ENCODE measurements at regions of chr10 and their contacts with region 1.

Region 1: DNA sequence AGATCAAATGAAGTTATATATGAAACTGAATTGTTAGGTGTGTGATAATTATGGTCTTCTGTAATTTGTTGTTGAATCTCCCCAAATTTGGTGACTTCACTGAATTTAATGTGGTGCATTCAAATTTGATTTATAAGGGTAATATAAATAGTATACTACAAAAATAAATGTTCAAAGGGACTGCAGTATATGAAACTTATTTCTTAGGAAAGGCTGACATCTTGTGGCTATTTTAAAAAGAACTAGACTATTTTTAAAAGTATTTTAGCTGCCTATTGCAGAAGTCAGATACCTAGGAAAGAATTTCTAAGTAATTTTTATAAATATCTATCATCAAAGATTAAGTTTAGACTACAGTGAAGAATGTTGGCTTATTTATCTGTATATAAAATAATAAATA is 36.6 kb downstream of the ATRNL1 start:
- DNase-seq: no peak

Region 2: DNA sequence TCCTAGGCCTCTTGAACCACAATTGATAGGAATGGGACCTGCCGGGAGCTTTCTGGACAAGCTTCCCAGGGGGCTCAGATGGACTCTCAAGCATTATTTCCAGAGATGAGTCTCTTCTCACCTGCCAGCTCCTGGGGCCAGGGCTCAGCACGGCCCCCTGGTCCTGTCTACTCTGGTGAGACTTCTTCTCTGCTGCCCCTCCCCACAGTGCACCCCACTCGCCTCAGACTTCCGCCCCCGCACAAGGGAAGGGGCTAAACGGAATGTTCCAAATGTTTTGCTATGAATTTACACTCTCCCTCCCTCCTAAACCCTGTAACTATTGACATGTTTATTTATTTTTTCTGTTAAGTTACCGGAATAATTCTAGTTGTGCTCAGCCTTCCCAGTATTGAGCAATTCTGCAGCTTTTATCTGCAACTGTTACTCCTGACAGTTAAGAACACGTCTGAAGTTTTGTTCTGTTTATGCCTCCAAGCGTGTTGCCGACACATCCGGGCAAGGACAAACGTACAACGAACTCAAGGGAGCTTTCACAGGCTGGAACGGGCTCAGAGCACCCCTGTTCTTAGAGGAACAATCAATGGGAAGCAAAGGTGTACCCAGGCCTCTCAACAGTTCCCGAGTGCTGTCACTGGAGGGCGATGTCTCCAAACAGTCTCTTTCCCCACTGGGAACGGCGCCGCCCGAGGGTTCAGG is 253.0 kb before region 1 on chr10:
- intact Hi-C with region 1: loop called (anchors 2 kb)
- DNase-seq: no peak

Measured in cardiac septum (tissue), 1 donor.